Transverse colon (tissue), 4 donors: ENCODE measurements at regions of chr2 and their contacts with region 1.

Region 1: GRCh38 chr2:199471443-199472057 is 13.8 kb upstream of the SATB2 start:
- DNase-seq: peak; percentile 83
- H3K4me3 ChIP-seq: peak overlapping the region in 3 of 4 donors; percentile 25 to 98 (median 40)
- H3K27ac ChIP-seq: peak overlapping the region; percentile 83 to 90 (median 87)
- H3K4me1 ChIP-seq: peaks cover 0 to 38% (median 24%) of the 10 kb centered on the region in 4 donors
- H3K27me3 ChIP-seq: peaks cover 81% of the 10 kb centered on the region
- CTCF ChIP-seq: peak; percentile 68 to 88 (median 75)
- EP300 ChIP-seq: no peak
- POLR2A ChIP-seq: peak; percentile 54

Region 2: DNA sequence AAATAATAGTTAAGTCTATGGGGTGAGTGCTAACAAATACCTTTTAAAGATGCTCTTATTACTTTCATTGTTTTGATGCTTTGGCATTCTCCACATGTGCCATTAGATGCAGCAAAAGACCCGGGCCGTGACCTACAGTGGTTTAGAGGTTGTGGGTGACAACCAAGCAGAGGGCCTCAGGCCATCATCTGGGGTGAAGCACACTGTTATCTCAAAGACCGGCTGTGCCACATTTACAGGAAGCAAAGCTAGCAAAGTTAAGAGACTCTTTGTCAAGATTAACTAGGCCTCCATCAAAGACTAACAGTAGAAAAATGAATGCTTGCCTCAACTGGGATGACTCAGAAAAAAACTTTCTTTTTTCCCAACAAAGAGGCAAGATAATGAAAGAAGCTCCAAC is 709.1 kb before region 1 on chr2:
- in situ Hi-C with region 1: loop called in 1 of 4 experiments (anchors 10 kb)
- intact Hi-C with region 1: no loop called
- DNase-seq: no peak
- H3K4me3 ChIP-seq: no peak overlapping the region
- H3K27ac ChIP-seq: no peak overlapping the region
- H3K4me1 ChIP-seq: peaks cover 0 to 32% (median 11%) of the 10 kb centered on the region in 4 donors
- H3K27me3 ChIP-seq: no peaks in the 10 kb centered on the region
- CTCF ChIP-seq: no peak
- EP300 ChIP-seq: no peak
- POLR2A ChIP-seq: no peak